ENCODE measurements at regions of chr3 and their contacts with region 1.

Region 1: GRCh38 chr3:187745201-187746058 is at the start of gene BCL6:
- DNase-seq: peak; percentile 94 to 96 (median 94)
- ATAC-seq: peak; percentile 68 to 84 (median 72)
- H3K4me3 ChIP-seq: peak within 1 kb of the TSS; percentile 54 to 89 (median 78)
- H3K27ac ChIP-seq: peak within 1 kb of the TSS; percentile 94 to 100 (median 98)
- H3K4me1 ChIP-seq: peaks cover 0 to 49% (median 14%) of the 10 kb centered on the region in 12 donors
- H3K27me3 ChIP-seq: no peaks in the 10 kb centered on the region
- CTCF ChIP-seq: peak in 2 of 12 donors; percentile 10 to 13
- POLR2A ChIP-seq: peak; percentile 84 to 92
- total RNA-seq, gene BCL6: 29.7 to 109 (median 62.0) TPM

Region 2: GRCh38 chr3:187629711-187630110 is 115.7 kb before region 1 on chr3:
- intact Hi-C with region 1: no loop called
- DNase-seq: no peak
- ATAC-seq: no peak
- H3K4me3 ChIP-seq: no peak overlapping the region
- H3K27ac ChIP-seq: no peak overlapping the region
- H3K4me1 ChIP-seq: no peaks in the 10 kb centered on the region
- H3K27me3 ChIP-seq: peaks cover 0 to 4% (median 0%) of the 10 kb centered on the region in 9 donors
- CTCF ChIP-seq: no peak
- POLR2A ChIP-seq: no peak

Region 3: GRCh38 chr3:187946163-187946691 is 200.8 kb after region 1 on chr3:
- intact Hi-C with region 1: loop called in 3 of 10 experiments (anchors 5 to 10 kb)
- DNase-seq: no peak
- ATAC-seq: peak in 3 of 4 donors; percentile 8 to 26 (median 25)
- H3K4me3 ChIP-seq: no peak overlapping the region
- H3K27ac ChIP-seq: peak overlapping the region in 10 of 12 donors; percentile 32 to 96 (median 80)
- H3K4me1 ChIP-seq: peaks cover 0 to 41% (median 16%) of the 10 kb centered on the region in 12 donors
- H3K27me3 ChIP-seq: no peaks in the 10 kb centered on the region
- CTCF ChIP-seq: no peak
- POLR2A ChIP-seq: no peak

Region 4: GRCh38 chr3:188031121-188031520 is 285.7 kb after region 1 on chr3:
- intact Hi-C with region 1: loop called in 5 of 10 experiments (anchors 2 to 10 kb)
- DNase-seq: no peak
- ATAC-seq: no peak
- H3K4me3 ChIP-seq: no peak overlapping the region
- H3K27ac ChIP-seq: peak overlapping the region in 2 of 12 donors; percentile 9 to 21
- H3K4me1 ChIP-seq: peaks cover 0 to 12% (median 0%) of the 10 kb centered on the region in 12 donors
- H3K27me3 ChIP-seq: no peaks in the 10 kb centered on the region
- CTCF ChIP-seq: no peak
- POLR2A ChIP-seq: no peak

Region 5: DNA sequence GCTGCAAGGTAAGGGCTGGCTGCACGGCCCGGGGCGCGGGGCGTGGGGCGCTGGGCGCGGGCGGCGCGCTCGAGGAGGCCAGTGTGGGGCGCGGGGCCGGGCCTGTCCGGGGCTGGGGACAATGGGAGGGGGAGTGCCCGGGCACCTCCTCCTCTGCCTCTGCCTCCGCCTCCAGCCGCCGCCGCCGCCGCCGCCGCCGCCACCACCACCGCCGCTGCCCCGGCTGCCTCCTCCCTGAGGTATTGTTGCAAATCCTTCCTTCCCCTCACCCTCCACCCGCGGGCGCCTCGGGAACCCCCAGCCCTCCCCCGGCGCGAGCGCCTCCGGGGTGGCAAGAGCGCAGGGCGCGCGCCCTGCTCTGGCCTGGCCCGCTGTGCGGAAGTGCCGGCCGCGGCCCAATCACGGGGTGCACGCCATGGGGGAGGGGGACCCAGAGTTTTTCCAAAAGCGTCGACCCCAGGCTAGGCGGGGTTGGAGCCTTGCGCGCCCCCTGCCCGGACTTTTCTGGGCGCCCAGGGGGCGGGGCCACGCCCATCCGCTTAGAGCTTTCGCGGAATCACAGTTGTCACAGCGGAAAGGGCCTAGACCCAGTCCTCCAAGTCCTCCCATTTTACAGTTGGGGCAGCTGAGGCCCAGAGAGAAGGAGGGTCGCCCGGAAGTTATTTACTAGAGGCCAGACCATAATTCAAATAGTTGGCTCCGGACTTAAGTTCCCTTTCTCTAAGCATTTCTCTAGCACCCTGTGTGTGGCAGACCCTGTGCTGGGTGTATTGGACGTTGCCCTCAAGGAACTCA is 408.8 kb after region 1 on chr3 and contains the start of gene LPP:
- intact Hi-C with region 1: loop called (anchors 1 to 10 kb)
- DNase-seq: peak; percentile 83 to 92 (median 86)
- ATAC-seq: peak; percentile 67 to 93 (median 82)
- H3K4me3 ChIP-seq: peak within 1 kb of the TSS; percentile 68 to 94 (median 86)
- H3K27ac ChIP-seq: peak within 1 kb of the TSS; percentile 90 to 99 (median 97)
- H3K4me1 ChIP-seq: peaks cover 0 to 62% (median 41%) of the 10 kb centered on the region in 12 donors
- H3K27me3 ChIP-seq: no peaks in the 10 kb centered on the region
- CTCF ChIP-seq: peak in 2 of 12 donors; percentile 7 to 25
- POLR2A ChIP-seq: no peak
- total RNA-seq, gene LPP: 76.6 to 178 (median 111) TPM

Region 6: DNA sequence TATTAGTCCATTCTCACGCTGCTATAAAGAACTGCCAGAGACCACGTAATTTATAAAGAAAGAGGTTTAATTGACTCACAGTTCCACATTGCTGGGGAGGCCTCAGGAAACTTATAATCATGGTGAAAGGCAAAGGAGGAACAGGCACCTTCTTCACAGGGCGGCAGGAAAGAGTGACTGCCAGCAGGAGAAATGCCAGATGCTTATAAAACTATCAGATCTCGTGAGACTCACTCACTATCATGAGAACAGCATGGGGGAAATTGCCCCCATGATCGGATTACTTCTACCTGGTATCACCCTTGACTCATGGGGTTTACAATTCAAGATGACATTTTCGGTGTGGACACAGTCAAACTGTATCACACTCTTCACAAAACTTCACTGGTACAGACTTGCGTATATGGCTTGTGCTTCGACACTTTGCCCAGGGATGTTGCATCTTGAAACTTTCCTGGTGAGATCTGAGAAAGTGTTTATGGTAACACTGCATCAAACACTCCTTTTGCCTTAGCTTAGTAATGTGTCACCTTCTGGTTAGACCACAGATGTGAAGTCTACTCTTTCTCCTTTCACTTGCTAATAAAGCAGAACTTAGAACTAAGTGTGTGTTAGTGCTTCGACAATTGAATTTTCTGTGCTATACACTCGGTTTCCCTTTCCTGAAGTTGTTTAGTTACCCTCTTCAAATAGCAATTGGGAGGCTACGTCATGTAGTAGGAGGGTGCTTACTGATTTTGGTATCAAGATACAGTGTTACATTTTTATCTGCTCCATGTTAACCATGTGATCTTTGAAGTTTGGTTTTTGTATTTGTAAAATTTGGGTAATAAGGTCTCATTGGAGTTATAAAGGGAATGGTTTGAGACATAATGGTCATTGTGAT is 594.2 kb after region 1 on chr3:
- intact Hi-C with region 1: loop called in 5 of 10 experiments (anchors 5 to 10 kb)
- DNase-seq: no peak
- ATAC-seq: no peak
- H3K4me3 ChIP-seq: no peak overlapping the region
- H3K27ac ChIP-seq: peak overlapping the region in 9 of 12 donors; percentile 2 to 55 (median 18)
- H3K4me1 ChIP-seq: peaks cover 0 to 45% (median 20%) of the 10 kb centered on the region in 12 donors
- H3K27me3 ChIP-seq: no peaks in the 10 kb centered on the region
- CTCF ChIP-seq: no peak
- POLR2A ChIP-seq: no peak

Region 7: GRCh38 chr3:188584162-188584529 is 838.7 kb after region 1 on chr3:
- intact Hi-C with region 1: loop called in 2 of 10 experiments (anchors 5 to 10 kb)
- DNase-seq: no peak
- ATAC-seq: peak in 2 of 4 donors; percentile 66 to 71
- H3K4me3 ChIP-seq: no peak overlapping the region
- H3K27ac ChIP-seq: peak overlapping the region in 3 of 12 donors; percentile 14 to 60 (median 52)
- H3K4me1 ChIP-seq: peaks cover 0 to 66% (median 14%) of the 10 kb centered on the region in 12 donors
- H3K27me3 ChIP-seq: no peaks in the 10 kb centered on the region
- CTCF ChIP-seq: no peak
- POLR2A ChIP-seq: no peak

Region 8: GRCh38 chr3:188947401-188948280 is 1202.2 kb after region 1 on chr3:
- intact Hi-C with region 1: loop called in 5 of 10 experiments (anchors 1 to 2 kb)
- DNase-seq: peak; percentile 91 to 97 (median 95)
- ATAC-seq: peak; percentile 90 to 93 (median 91)
- H3K4me3 ChIP-seq: peak overlapping the region in 11 of 12 donors; percentile 14 to 58 (median 51)
- H3K27ac ChIP-seq: peak overlapping the region; percentile 90 to 99 (median 96)
- H3K4me1 ChIP-seq: peaks cover 0 to 95% (median 38%) of the 10 kb centered on the region in 12 donors
- H3K27me3 ChIP-seq: no peaks in the 10 kb centered on the region
- CTCF ChIP-seq: peak in 9 of 12 donors; percentile 14 to 50 (median 35)
- POLR2A ChIP-seq: peak in 1 of 2 donors; percentile 73

Measured in heart left ventricle (tissue), 16 donors.